Adrenal gland (tissue), 19 donors: ENCODE measurements at regions of chr4 and their contacts with region 1.

Region 1: DNA sequence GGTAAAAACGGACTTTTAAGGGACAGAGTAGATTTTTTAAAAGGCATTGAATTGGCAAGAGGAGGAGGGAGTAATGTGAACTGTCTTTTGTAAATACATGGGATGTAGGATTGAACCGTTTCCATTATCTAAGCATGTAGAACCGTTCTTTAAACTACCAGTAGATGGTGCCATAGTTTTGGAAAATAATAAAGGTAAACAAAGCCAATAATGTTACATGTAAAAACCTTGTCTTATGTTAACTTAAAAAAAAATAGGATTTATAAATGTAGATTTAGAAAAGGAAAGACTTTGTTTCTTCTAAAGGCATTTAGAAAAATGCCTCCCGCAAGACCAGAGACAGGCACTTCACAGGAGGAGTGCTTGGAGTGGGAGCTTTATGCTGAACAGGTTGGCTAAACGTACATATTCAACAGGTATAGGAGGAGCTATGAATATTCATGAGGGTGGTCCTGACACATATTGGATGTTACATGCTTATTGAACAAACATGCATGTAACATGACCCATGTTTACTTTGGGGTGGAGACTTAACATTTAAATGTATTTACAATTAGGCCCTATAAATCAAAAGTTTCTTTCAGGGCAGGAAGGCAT is 45.5 kb upstream of the FAM241A start:
- DNase-seq: no peak
- H3K4me3 ChIP-seq: no peak overlapping the region
- H3K27ac ChIP-seq: no peak overlapping the region
- H3K4me1 ChIP-seq: no peaks in the 10 kb centered on the region
- H3K27me3 ChIP-seq: no peaks in the 10 kb centered on the region
- CTCF ChIP-seq: peak; percentile 40 to 77 (median 69)
- POLR2A ChIP-seq: no peak

Region 2: GRCh38 chr4:111991797-111992196 is 108.0 kb before region 1 on chr4:
- intact Hi-C with region 1: no loop called
- DNase-seq: peak in 1 of 7 donors; percentile 2
- H3K4me3 ChIP-seq: no peak overlapping the region
- H3K27ac ChIP-seq: peak overlapping the region in 1 of 5 donors; percentile 59
- H3K4me1 ChIP-seq: no peaks in the 10 kb centered on the region
- H3K27me3 ChIP-seq: no peaks in the 10 kb centered on the region
- CTCF ChIP-seq: no peak
- POLR2A ChIP-seq: no peak

Region 3: DNA sequence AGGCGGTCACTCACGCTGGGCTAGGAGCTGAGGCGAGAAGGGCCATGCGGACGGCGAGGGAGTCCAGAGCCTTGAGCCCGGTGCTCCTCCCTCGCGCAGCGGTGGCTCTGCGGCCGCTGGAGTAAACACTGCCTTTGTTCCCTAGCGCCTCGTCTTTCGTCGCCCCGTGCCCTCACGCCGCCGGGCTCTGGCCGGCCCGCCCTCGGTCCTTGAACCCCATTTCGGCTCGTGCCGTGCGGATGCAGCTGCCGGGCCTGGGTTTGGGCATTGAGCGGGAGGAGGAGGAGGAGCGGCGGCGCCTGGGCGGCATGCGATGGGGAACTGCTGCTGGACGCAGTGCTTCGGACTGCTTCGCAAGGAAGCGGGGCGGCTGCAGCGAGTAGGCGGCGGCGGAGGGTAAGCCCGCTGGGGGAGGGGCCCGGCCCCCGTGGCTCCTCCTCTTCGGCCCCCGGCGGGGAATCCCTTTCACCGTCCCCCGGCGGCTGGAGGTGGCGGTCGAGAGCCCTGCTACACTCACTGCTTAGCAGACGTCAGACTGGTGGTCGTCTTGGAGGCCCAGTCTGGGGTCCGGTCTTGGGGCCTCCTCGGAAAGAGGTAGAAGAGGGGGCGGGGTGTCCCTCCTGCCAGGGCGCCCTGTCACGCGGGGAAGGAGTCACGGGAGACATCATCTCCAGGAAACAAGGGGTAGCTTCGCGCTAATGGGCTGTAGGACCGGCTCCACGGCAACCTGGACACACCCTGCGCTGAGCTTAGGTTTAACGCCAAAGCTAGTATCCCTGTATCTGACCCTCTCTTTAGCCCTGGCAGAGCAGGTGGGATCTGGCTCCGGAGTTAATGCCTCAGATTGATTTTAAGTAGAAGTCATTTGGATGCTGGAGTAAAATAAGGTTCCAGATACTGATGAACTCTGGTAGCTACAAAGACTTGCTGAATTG is 132.2 kb after region 1 on chr4 and contains the start of gene AP1AR:
- intact Hi-C with region 1: loop called in 1 of 2 experiments (anchors 5 kb)
- DNase-seq: peak; percentile 76 to 89 (median 82)
- H3K4me3 ChIP-seq: peak within 1 kb of the TSS; percentile 59 to 92 (median 84)
- H3K27ac ChIP-seq: peak within 1 kb of the TSS; percentile 84 to 97 (median 95)
- H3K4me1 ChIP-seq: peaks cover 3 to 12% of the 10 kb centered on the region in 2 donors
- H3K27me3 ChIP-seq: no peaks in the 10 kb centered on the region
- CTCF ChIP-seq: peak in 4 of 6 experiments; percentile 24 to 38 (median 29)
- POLR2A ChIP-seq: peak; percentile 72 to 95
- total RNA-seq, gene AP1AR: 13.1 to 30.1 (median 19.6) TPM

Region 4: GRCh38 chr4:112523764-112524505 is 424.1 kb after region 1 on chr4:
- intact Hi-C with region 1: loop called in 1 of 2 experiments (anchors 10 kb)
- DNase-seq: peak in 4 of 7 donors; percentile 40 to 51 (median 44)
- H3K4me3 ChIP-seq: peak overlapping the region in 2 of 4 donors; percentile 32 to 37
- H3K27ac ChIP-seq: no peak overlapping the region
- H3K4me1 ChIP-seq: peaks cover 10 to 15% of the 10 kb centered on the region in 2 donors
- H3K27me3 ChIP-seq: peaks cover 56% of the 10 kb centered on the region
- CTCF ChIP-seq: peak; percentile 27 to 62 (median 48)
- POLR2A ChIP-seq: no peak

Region 5: GRCh38 chr4:112604589-112604988 is 504.8 kb after region 1 on chr4:
- intact Hi-C with region 1: loop called in 1 of 2 experiments (anchors 10 kb)
- DNase-seq: peak; percentile 33 to 75 (median 56)
- H3K4me3 ChIP-seq: no peak overlapping the region
- H3K27ac ChIP-seq: no peak overlapping the region
- H3K4me1 ChIP-seq: no peaks in the 10 kb centered on the region
- H3K27me3 ChIP-seq: no peaks in the 10 kb centered on the region
- CTCF ChIP-seq: peak; percentile 40 to 66 (median 49)
- POLR2A ChIP-seq: no peak

Region 6: DNA sequence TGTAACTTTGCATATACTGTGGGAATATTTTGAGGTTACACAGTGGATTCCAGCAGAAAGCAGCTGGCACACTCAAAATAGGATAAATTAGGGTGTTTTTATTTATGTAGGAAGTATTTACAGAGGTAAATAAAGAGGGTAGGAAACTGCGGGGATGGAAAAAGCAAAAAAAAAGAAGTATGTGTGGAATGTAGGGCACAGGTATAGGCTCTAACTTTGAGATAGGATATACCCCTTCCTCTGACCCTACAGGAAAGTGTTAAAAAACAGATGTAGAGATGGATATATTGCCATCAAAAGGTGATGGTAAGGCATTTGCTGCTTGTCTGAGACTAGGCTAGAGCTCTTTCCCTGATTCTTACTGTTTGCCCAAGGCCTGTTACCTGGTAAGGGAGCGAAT is 776.5 kb after region 1 on chr4:
- intact Hi-C with region 1: no loop called
- DNase-seq: no peak
- H3K4me3 ChIP-seq: no peak overlapping the region
- H3K27ac ChIP-seq: no peak overlapping the region
- H3K4me1 ChIP-seq: no peaks in the 10 kb centered on the region
- H3K27me3 ChIP-seq: no peaks in the 10 kb centered on the region
- CTCF ChIP-seq: no peak
- POLR2A ChIP-seq: no peak